Esophagus muscularis mucosa (tissue), 4 donors: ENCODE measurements at regions of chr4 and their contacts with region 1.

Region 1: GRCh38 chr4:46270986-46271596 is 118.8 kb downstream of the GABRA2 start:
- DNase-seq: no peak
- H3K4me3 ChIP-seq: no peak overlapping the region
- H3K27ac ChIP-seq: no peak overlapping the region
- H3K4me1 ChIP-seq: no peaks in the 10 kb centered on the region
- H3K27me3 ChIP-seq: no peaks in the 10 kb centered on the region
- CTCF ChIP-seq: peak; percentile 22 to 49 (median 46)
- EP300 ChIP-seq: no peak
- POLR2A ChIP-seq: no peak

Region 2: DNA sequence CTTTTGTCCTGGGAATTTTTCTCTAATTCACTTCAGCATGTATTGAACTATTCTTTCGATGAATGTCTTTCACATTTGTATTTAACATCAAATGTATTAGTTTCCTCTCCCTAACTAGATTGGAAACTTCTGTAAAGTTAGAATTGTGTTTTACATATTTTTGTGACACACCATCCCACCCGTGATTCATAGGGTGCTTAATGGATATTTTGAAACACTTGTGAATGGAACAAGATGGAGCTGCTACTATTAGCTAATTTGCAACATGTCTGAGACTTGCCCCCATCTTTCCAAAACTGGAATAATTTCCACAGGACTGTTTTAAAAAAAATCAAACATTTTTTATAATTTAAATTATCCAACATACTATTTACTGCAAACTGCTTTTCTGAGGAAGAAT is 1514.5 kb before region 1 on chr4:
- intact Hi-C with region 1: loop called (anchors 5 kb)
- DNase-seq: no peak
- H3K4me3 ChIP-seq: no peak overlapping the region
- H3K27ac ChIP-seq: no peak overlapping the region
- H3K4me1 ChIP-seq: peaks cover 0 to 12% (median 4%) of the 10 kb centered on the region in 4 donors
- H3K27me3 ChIP-seq: no peaks in the 10 kb centered on the region
- CTCF ChIP-seq: no peak
- EP300 ChIP-seq: no peak
- POLR2A ChIP-seq: no peak

Region 3: DNA sequence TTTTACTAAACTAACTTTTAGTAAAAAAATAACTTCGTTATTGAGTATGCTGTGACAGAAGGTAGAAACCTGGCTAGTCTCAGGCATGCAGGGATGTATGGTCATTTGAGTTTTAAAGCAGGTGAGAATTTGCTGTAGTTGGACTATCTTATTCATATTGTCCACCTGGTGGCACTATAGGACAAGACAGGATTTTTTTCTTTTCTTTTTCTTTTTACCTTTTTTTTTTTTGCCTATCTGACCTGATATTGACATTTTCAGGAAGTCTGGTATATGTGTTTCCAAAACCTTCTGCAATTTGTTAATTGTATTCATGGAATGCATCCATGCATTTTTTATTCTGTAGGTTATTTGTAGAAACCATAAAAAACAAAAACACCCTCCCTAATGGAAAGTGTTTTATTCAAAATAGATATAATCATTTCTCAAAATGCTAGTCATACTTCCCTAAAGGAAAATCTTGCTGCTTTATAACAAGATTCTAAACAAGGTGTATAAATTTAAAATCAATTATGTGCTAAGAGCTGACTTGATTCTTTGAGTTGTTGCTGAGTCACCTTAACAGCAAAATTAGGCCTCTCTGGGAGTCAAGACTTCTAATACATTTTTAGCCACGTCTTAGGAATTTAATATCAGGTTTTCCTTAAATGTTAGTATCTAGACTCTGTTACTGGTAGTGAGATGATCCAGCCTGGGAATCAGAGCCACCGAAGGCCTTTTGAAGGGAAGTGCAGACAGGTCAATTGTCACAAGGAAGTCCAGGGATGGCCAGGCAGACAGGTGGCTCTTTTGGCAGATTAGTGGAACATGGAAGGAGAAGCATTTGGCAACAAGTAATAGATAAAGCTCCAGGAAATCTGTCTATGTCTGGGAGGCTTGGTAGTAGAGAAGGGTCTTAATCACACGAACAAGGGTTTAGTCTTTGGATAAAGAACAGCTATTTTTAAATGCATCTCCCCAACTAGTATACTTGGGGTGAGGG is 1343.4 kb before region 1 on chr4:
- intact Hi-C with region 1: loop called (anchors 5 kb)
- DNase-seq: no peak
- H3K4me3 ChIP-seq: no peak overlapping the region
- H3K27ac ChIP-seq: no peak overlapping the region
- H3K4me1 ChIP-seq: peaks cover 0 to 9% (median 1%) of the 10 kb centered on the region in 4 donors
- H3K27me3 ChIP-seq: no peaks in the 10 kb centered on the region
- CTCF ChIP-seq: peak; percentile 19 to 69 (median 52)
- EP300 ChIP-seq: no peak
- POLR2A ChIP-seq: no peak

Region 4: DNA sequence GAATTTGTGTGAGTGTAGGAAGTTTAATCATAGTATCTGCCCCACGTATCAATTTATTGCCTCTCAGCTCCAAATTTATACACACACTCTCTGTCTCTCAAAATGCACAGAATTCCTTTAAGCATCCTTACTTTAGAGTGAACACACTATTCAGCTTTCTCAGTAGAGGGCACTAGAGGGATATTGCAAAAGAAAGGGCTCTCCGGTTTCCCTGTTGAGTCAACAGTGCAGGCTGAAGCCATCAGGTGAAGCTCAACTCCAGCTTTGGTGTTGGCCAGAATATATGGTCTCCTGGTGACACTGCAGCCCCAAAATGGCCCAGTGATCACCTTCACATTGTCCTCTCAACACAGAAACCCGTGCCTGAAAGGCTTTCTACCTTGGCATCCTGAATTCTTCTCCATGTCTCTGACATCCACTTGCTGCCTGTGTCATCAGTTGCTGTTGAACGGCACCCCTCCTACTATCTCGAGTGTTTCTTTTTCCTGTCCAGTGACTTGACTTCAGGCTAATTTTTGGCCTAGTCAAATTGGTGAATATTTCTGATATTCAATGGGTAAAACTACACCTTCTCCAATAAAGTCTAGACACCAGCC is 817.7 kb before region 1 on chr4:
- intact Hi-C with region 1: loop called (anchors 10 kb)
- DNase-seq: no peak
- H3K4me3 ChIP-seq: no peak overlapping the region
- H3K27ac ChIP-seq: no peak overlapping the region
- H3K4me1 ChIP-seq: no peaks in the 10 kb centered on the region
- H3K27me3 ChIP-seq: no peaks in the 10 kb centered on the region
- CTCF ChIP-seq: peak; percentile 28 to 65 (median 44)
- EP300 ChIP-seq: no peak
- POLR2A ChIP-seq: no peak

Region 5: DNA sequence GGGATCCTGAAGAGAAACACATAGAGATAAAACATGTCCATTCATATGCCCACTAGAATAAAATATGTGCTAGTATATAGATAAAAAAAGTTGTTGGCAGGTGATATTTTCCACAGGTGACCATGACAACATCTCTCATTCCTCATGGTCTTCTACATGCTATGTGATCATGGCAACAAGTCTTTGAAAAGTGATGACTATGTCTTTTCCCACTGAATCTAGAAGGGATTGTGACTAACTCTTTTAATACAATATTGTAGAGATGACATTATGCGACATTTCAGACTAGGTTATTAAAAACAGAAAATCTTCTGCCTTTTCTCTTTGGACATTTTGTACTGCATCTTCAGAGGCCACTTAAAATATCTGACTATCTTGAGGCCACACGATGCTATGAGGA is 244.8 kb after region 1 on chr4:
- intact Hi-C with region 1: no loop called
- DNase-seq: no peak
- H3K4me3 ChIP-seq: no peak overlapping the region
- H3K27ac ChIP-seq: no peak overlapping the region
- H3K4me1 ChIP-seq: no peaks in the 10 kb centered on the region
- H3K27me3 ChIP-seq: no peaks in the 10 kb centered on the region
- CTCF ChIP-seq: no peak
- EP300 ChIP-seq: no peak
- POLR2A ChIP-seq: no peak